ENCODE measurements at regions of chr17 and their contacts with region 1.

Region 1: GRCh38 chr17:71467719-71468118 is 653.1 kb upstream of the SOX9 start:
- DNase-seq: no peak
- H3K4me3 ChIP-seq: no peak overlapping the region
- CTCF ChIP-seq: no peak
- POLR2A ChIP-seq: no peak

Region 2: GRCh38 chr17:72531729-72532128 is 1064.0 kb after region 1 on chr17:
- intact Hi-C with region 1: loop called (anchors 5 kb)
- DNase-seq: no peak
- H3K4me3 ChIP-seq: no peak overlapping the region
- CTCF ChIP-seq: no peak
- POLR2A ChIP-seq: no peak

Measured in lower leg skin (tissue), 4 donors.